Activated CD4-positive, alpha-beta memory T cell treated with anti-CD3 and anti-CD28 coated beads for 36 hours (primary cell): ENCODE measurements at regions of chr12 and their contacts with region 1.

Region 1: DNA sequence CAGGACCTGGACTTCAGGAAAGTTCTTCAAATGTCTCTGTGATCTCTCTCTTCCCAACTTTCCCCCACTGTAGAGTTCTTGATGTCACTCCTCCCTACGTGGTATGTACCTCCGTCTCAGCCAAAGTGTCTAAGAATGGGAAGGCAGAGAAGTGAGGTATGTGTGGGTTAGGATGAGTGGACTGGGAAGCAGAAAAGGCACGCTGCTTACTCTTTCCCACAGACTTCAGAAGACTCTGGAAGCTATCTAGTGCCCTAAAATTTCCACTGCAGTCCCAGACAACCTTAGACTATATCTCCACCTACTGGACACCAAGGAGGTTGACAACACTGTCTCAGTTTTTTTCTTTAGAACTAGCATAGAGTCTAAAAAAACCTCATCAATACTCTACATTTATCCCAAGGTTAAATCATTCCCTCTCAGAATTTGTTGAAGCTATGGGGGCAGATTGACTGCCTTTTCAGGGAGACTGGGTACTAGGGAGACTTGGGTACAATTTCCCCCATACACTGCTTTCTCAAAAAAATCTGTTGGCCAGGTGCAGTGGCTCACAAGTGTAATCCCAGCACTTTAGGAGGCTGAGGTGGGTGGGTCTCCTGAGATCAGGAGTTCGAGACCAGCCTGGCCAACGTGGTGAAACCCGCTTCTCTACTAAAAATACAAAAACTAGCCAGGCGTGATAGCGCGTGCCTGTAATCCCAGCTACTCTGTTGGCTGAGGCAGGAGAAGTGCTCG is 20.6 kb upstream of the ITGA5 start:
- DNase-seq: no peak
- H3K4me3 Mint-ChIP-seq: no peak overlapping the region
- H3K27ac Mint-ChIP-seq: no peak overlapping the region
- H3K4me1 Mint-ChIP-seq: peaks cover 6% of the 10 kb centered on the region
- H3K27me3 Mint-ChIP-seq: peaks cover 2% of the 10 kb centered on the region

Region 2: DNA sequence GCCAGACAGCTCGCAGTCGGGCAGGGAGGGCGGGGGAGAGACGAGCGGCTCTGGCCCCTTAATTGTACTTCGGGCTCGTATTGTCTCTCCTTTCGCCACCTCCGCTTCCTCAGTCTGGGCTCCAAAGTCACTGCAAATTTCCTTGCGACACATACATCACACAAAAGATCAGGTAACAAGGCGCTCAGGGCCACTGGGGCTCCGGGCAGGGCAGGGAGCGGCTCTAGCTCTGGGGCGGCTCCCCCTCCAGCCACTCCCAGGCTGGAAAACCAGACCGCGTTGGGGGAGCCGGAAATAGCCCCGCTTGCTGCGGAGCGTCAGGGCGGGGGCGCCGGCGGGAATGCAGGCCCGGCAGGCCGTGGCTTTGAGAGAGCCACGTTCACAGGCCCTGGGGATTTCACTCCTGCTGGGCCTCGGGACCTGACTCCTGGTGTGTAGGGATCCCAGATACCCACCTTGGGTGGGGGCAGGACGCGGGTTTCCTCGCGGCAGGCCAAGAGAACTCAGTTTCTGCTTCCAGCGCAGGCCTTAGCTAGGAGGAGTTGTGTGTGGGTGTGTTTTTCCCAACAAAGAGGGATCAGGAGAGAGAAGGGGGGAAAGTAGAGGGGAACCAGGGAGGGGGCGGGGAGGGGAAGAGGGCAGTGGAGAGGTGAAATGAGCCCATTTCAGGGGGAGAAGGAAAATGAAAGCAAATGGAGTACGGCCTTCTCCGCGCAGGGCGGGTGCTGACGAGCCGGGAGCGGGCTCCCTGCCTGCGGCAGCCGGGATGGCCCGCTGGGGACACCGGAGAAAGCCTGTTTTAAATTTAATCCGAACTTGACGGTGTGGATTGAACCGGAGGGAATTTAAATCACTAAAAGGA is 444.1 kb before region 1 on chr12:
- CTCF ChIA-PET with region 1: no interaction called
- POLR2A ChIA-PET with region 1: no interaction called
- intact Hi-C with region 1: no loop called
- DNase-seq: peak; percentile 44
- H3K4me3 Mint-ChIP-seq: peak overlapping the region; percentile 73
- H3K27ac Mint-ChIP-seq: no peak overlapping the region
- H3K4me1 Mint-ChIP-seq: peaks cover 30% of the 10 kb centered on the region
- H3K27me3 Mint-ChIP-seq: peaks cover 82% of the 10 kb centered on the region

Region 3: DNA sequence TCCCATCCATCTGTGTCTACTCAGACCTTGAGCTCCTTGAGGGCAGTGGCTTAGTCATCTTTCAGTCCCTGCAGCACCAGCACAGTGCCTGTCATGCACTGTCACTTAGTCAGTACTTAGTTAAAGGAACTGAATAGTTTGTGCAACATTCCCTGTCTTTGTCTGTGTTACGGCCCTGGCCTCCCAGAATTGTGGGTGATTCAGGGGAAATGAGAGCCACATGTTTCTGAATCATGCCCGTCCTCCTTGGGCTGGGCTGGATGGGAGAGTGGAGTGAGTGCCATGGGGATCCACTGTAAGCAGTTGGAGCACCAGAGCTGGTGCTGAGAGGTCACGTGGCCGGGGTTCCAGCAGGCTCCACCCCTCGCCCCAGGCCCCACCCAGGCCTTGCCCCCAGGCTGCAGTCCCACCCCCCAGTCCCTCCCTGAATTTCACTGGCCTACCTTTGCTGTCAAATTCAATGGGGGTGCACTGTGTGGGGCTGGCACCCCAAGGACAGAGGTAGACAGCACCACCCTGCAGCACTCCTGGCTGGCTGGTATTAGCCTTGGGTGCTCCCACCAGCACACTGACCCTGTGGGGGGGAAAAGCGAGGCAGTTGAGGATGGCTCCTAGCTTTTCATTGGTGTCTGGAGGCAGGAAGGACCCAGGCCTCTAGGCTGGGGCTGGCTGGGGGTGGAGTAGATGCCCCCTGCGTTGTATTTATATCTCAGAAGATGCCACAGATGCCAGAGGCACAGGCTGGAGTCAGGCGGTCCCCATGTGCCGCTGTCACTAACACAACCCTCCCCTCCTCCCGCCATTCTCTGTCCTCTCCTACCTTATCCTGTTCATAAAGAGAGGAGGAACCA is 28.1 kb before region 1 on chr12:
- CTCF ChIA-PET with region 1: interaction called, 693 read pairs
- POLR2A ChIA-PET with region 1: interaction called, 3 read pairs
- intact Hi-C with region 1: loop called (anchors 2 kb)
- DNase-seq: peak; percentile 77
- H3K4me3 Mint-ChIP-seq: no peak overlapping the region
- H3K27ac Mint-ChIP-seq: peak overlapping the region; percentile 96
- H3K4me1 Mint-ChIP-seq: peaks cover 63% of the 10 kb centered on the region
- H3K27me3 Mint-ChIP-seq: no peaks in the 10 kb centered on the region

Region 4: DNA sequence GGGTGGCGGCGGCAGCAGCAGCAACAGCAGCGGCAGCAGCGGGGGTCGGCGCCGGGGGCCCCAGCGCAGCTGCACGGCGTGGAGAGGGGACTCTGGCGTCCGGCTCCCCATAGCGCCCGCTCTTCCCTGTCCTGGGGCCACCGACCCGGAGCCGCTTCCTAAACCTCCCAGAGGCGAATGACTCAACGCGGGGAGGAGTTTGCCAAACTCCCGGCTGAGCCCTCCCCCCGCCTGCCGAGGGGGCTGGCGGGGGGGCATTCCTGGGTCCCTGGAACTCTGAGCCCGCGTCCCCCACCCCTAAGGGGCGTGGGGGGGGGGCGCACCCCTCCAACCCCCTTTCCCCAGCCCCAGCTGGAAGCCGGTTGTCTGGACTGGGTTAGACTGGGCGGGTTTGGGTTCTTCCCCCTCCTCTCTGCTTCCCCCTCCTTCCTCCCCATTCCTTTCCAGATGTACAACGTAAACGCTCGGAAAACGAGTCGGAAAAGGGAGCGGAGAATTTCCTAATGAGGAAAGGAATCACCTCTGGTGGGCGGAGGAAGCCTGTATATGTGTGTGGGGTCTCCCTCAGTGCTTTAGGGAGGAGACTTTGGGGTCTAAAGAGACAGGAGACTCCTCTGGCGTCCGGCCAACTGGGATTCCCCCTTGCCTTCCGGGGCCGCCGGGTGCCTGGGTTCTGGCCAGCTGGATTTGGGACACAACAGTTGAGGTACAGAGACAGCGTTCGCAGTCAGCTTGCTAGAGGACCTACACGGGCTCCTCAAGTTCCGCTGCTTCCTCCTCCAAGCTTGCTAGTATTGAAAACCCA is 20.4 kb before region 1 on chr12 and contains the start of gene ITGA5:
- CTCF ChIA-PET with region 1: interaction called, 99 read pairs
- POLR2A ChIA-PET with region 1: no interaction called
- intact Hi-C with region 1: no loop called
- DNase-seq: peak; percentile 63
- H3K4me3 Mint-ChIP-seq: peak within 1 kb of the TSS; percentile 93
- H3K27ac Mint-ChIP-seq: peak within 1 kb of the TSS; percentile 91
- H3K4me1 Mint-ChIP-seq: peaks cover 45% of the 10 kb centered on the region
- H3K27me3 Mint-ChIP-seq: no peaks in the 10 kb centered on the region
- total RNA-seq, gene ITGA5: 33.8 to 34.9 TPM

Region 5: DNA sequence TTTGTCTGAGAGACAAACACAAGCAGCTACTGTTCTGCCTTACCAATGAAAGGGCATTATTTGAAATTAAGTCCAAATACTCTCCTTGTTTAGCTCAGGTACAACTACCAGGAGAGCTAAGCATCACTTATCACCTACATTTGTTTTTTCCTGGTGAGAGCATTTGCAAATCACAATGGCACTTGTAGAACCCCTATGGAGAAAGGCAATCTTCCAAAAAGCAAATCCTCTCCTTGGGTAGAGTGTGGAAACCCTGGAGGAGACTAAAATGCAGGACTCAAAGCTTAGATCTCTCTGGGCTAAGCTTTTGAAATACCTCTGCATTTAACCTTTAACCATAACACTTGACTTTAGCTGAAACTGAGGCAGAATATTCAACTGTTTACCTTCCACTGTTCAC is 12.9 kb after region 1 on chr12:
- CTCF ChIA-PET with region 1: interaction called, 16 read pairs
- POLR2A ChIA-PET with region 1: no interaction called
- intact Hi-C with region 1: no loop called
- DNase-seq: no peak
- H3K4me3 Mint-ChIP-seq: no peak overlapping the region
- H3K27ac Mint-ChIP-seq: no peak overlapping the region
- H3K4me1 Mint-ChIP-seq: no peaks in the 10 kb centered on the region
- H3K27me3 Mint-ChIP-seq: no peaks in the 10 kb centered on the region

Region 6: GRCh38 chr12:54560374-54560858 is 120.7 kb after region 1 on chr12:
- CTCF ChIA-PET with region 1: no interaction called
- POLR2A ChIA-PET with region 1: no interaction called
- intact Hi-C with region 1: no loop called
- DNase-seq: peak; percentile 94
- H3K4me3 Mint-ChIP-seq: peak overlapping the region; percentile 69
- H3K27ac Mint-ChIP-seq: peak overlapping the region; percentile 74
- H3K4me1 Mint-ChIP-seq: peaks cover 23% of the 10 kb centered on the region
- H3K27me3 Mint-ChIP-seq: no peaks in the 10 kb centered on the region